PC-9 (cell line): ENCODE measurements at regions of chr3 and their contacts with region 1.

Region 1: DNA sequence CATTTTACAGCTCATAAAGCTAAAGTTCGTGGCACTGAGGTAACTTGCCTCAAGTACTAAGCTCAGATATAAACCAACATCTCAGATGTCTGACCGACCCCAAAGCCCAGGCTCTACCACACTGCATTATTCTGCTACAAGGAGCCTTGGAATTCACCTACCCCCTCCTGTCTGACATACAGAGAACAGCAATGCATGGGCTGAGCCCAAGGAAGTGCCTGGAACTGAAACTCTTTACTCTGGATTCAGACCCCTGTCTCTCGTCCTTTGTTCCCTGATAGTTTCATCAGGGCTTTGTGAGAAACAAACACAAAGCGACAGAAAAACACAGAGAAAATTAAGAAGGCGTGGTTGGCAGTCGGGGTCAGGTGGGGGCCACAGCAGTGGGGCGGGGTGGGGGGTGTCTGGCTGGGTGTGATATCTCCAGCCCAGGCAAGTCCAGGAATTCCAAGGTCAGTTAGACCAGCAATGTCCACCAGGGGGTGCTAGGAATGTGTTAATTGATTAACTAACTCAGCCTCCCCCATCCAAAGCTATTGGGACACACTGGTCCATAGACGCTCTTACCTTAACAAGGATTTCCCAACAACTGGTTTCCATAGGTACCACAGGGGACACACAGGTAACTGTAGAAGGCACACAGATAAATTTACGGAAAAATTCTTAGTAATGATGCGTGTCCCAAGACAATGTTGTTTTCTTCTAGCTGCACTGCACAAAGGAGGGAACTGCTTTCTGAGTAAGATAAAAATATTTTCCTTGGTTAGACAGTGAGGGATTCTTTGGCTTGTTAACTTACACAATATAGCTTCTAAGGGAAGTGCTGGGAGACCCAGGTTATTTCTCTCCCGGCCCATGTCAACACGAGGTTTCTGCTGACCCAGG is 18.8 kb upstream of the SSUH2 start:
- DNase-seq: peak; percentile 76 to 81
- H3K4me3 ChIP-seq: no peak overlapping the region
- H3K27ac ChIP-seq: no peak overlapping the region
- H3K4me1 ChIP-seq: peaks cover 21% of the 10 kb centered on the region
- H3K27me3 ChIP-seq: no peaks in the 10 kb centered on the region
- CTCF ChIP-seq: peak; percentile 82

Region 2: GRCh38 chr3:8501371-8502131 is 161.9 kb before region 1 on chr3 and contains the start of gene LMCD1:
- CTCF ChIA-PET with region 1: no interaction called
- POLR2A ChIA-PET with region 1: no interaction called
- intact Hi-C with region 1: loop called (anchors 1 kb)
- DNase-seq: peak; percentile 85 to 94
- H3K4me3 ChIP-seq: peak within 1 kb of the TSS; percentile 78
- H3K27ac ChIP-seq: peak within 1 kb of the TSS; percentile 97
- H3K4me1 ChIP-seq: peaks cover 83% of the 10 kb centered on the region
- H3K27me3 ChIP-seq: no peaks in the 10 kb centered on the region
- CTCF ChIP-seq: no peak
- total RNA-seq, gene LMCD1: 10.0 and 10.3 TPM in 2 replicates

Region 3: DNA sequence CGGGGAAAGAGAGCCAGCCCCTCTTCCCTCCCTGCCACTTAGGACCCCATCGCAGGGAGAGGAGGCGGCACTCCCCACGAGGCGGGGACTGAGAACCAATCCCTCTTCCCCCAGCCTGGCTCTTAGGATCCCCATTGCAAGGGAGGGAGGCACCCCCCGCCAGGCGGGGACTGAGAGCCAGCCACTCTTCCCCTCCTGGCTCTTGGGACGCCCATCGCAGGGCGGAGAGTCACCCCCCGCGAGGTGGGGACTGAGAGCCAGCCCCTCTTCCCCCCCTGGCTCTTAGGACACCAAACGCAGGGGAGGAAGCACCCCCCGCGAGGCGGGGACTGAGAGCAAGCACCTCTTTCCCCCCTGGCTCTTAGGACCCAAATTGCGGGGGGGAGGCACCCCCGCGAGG is 15.3 kb after region 1 on chr3:
- CTCF ChIA-PET with region 1: no interaction called
- POLR2A ChIA-PET with region 1: no interaction called
- intact Hi-C with region 1: loop called (anchors 1 kb)
- DNase-seq: no peak
- H3K4me3 ChIP-seq: peak overlapping the region; percentile 57; the same call in 1 of the 2 replicates
- H3K27ac ChIP-seq: peak overlapping the region; percentile 95
- H3K4me1 ChIP-seq: peaks cover 53% of the 10 kb centered on the region
- H3K27me3 ChIP-seq: no peaks in the 10 kb centered on the region
- CTCF ChIP-seq: no peak

Region 4: GRCh38 chr3:8769088-8769822 is 105.8 kb after region 1 on chr3 and contains the start of gene OXTR:
- CTCF ChIA-PET with region 1: interaction called, 3 read pairs
- POLR2A ChIA-PET with region 1: no interaction called
- intact Hi-C with region 1: loop called (anchors 1 kb)
- DNase-seq: peak in 1 of 2 experiments; percentile 80
- H3K4me3 ChIP-seq: peak within 1 kb of the TSS; percentile 53; the same call in 1 of the 2 replicates
- H3K27ac ChIP-seq: no peak within 1 kb of the TSS
- H3K4me1 ChIP-seq: peaks cover 9% of the 10 kb centered on the region; the same call in 1 of the 2 replicates
- H3K27me3 ChIP-seq: no peaks in the 10 kb centered on the region
- CTCF ChIP-seq: peak; percentile 100
- total RNA-seq, gene OXTR: 3.4 and 6.9 TPM in 2 replicates

Region 5: GRCh38 chr3:8963137-8963869 is 299.9 kb after region 1 on chr3 and contains the start of gene RAD18:
- CTCF ChIA-PET with region 1: no interaction called
- POLR2A ChIA-PET with region 1: no interaction called
- intact Hi-C with region 1: loop called (anchors 1 kb)
- DNase-seq: peak; percentile 70 to 90
- H3K4me3 ChIP-seq: peak within 1 kb of the TSS; percentile 69
- H3K27ac ChIP-seq: peak within 1 kb of the TSS; percentile 77
- H3K4me1 ChIP-seq: peaks cover 37% of the 10 kb centered on the region
- H3K27me3 ChIP-seq: no peaks in the 10 kb centered on the region
- CTCF ChIP-seq: no peak
- total RNA-seq, gene RAD18: 19.1 and 29.1 TPM in 2 replicates

Region 6: GRCh38 chr3:9302425-9303181 is 639.2 kb after region 1 on chr3:
- CTCF ChIA-PET with region 1: interaction called, 3 read pairs
- POLR2A ChIA-PET with region 1: no interaction called
- intact Hi-C with region 1: loop called (anchors 1 kb)
- DNase-seq: peak; percentile 61 to 83
- H3K4me3 ChIP-seq: no peak overlapping the region
- H3K27ac ChIP-seq: no peak overlapping the region
- H3K4me1 ChIP-seq: 0 out of 2 replicates have a peak, but pooled peaks cover 4% of the 10 kb centered on the region
- H3K27me3 ChIP-seq: no peaks in the 10 kb centered on the region
- CTCF ChIP-seq: peak; percentile 94